ENCODE measurements at regions of chr1 and their contacts with region 1.

Region 1: GRCh38 chr1:231315887-231316286 is 21.8 kb downstream of the EXOC8 start:
- DNase-seq: peak; percentile 59
- H3K4me3 ChIP-seq: no peak overlapping the region
- H3K27ac ChIP-seq: no peak overlapping the region
- H3K4me1 ChIP-seq: no peaks in the 10 kb centered on the region
- H3K27me3 ChIP-seq: no peaks in the 10 kb centered on the region
- CTCF ChIP-seq: peak; percentile 70 to 83
- POLR2A ChIP-seq: no peak

Region 2: DNA sequence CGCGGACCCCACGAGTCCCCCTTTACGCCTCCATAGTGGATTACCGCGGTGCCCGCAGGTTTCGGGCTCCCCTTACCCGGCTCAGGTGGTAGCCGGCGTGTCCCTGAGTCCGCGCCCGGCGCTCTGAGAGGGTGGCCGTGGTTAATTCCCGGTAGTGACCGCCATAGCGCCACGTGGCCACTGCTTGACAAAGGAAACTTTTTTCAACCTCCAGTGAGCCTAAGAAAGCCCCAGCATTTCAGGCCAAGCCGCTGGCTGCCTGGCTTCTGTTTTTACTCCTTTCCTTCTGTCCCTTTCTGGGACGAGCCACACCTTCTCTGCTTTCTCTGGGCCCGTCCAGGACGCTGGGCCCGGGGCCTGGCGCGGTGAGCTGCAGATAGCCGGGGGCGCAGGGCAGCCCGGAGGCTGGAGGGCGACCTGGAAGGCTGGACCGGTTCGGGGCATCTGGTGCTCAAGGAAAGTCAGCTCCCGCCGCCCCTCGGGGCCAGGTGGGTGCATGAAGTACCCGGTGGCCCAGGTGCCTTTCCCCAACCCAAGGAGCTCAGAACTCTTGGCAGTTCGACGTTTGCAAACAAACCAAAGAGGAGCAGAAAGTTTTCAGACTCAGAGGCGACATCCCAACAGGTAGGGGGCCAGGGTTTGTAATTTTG is 447.0 kb before region 1 on chr1:
- CTCF ChIA-PET with region 1: no interaction called
- POLR2A ChIA-PET with region 1: no interaction called
- dilution Hi-C with region 1: no loop called
- intact Hi-C with region 1: no loop called
- DNase-seq: peak; percentile 45
- H3K4me3 ChIP-seq: peak overlapping the region; percentile 27 to 93 (median 42)
- H3K27ac ChIP-seq: peak overlapping the region; percentile 33
- H3K4me1 ChIP-seq: peaks cover 17% of the 10 kb centered on the region
- H3K27me3 ChIP-seq: no peaks in the 10 kb centered on the region
- CTCF ChIP-seq: no peak
- POLR2A ChIP-seq: no peak

Region 3: DNA sequence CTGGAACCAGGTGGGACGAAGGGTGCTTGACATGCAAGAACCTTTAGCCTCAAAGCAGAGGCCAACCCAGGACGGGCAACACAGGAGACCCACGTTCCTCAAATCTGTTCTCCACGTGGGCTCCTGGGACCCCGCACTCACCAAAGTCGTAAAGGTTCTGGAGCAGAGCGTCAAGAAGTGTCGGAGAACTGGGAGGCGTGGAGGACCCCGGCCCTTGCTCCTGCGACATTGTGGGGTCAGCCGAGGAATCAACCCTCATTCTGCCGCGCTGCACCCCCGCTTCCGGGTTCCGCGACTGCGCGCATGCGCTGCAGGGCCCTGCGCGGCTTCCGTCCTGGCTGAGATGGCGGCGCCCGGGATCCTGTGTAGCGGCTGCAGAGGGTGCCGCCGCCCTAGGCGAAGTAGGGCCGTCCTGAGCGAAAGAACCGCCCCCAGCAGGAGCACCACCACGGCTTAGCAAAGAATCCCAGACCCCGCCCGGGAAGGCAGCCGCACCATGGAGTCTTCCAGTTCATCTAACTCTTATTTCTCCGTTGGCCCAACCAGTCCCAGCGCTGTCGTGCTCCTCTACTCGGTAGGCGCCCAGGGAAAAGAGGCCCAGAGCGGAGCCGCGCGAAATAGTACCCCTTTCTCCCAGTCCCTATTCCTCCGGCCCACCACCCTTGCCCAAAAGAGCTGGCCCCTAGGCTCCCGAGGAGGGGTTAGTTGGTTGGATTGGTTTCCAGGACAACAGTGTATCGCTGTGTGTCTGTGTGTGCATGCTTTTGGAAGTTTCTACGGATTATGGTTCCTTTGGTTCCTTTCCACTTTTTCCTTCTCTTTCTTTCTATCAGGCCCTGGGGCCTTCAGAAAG is 74.8 kb before region 1 on chr1 and contains the start of gene GNPAT:
- CTCF ChIA-PET with region 1: no interaction called
- POLR2A ChIA-PET with region 1: no interaction called
- dilution Hi-C with region 1: no loop called
- intact Hi-C with region 1: loop called (anchors 5 kb)
- DNase-seq: peak; percentile 87
- H3K4me3 ChIP-seq: peak within 1 kb of the TSS; percentile 57 to 97 (median 94)
- H3K27ac ChIP-seq: peak within 1 kb of the TSS; percentile 59
- H3K4me1 ChIP-seq: peaks cover 19% of the 10 kb centered on the region
- H3K27me3 ChIP-seq: no peaks in the 10 kb centered on the region
- CTCF ChIP-seq: no peak
- POLR2A ChIP-seq: peak; percentile 94
- total RNA-seq, gene GNPAT: 44.1 and 51.4 TPM in 2 replicates

Region 4: DNA sequence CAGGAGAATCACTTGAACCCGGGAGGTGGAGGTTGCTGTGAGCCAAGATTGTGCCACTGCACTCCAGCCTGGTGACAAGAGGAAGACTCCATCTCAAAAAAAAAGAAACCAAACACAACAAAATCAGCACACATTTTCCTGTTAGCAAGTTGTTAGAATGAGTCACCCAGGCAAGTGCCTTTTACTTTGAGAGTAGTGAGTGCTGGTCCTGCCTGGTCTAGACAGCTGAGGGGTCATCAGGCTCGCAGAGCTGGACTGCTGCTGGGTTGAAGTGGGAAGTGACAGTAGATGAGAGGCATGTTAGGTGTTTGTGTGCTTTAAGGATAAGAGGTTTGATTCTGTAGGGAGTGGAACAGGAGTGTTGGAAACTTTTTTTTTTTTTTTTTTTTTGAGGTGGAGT is 43.0 kb before region 1 on chr1:
- CTCF ChIA-PET with region 1: interaction called, 3 read pairs
- POLR2A ChIA-PET with region 1: no interaction called
- dilution Hi-C with region 1: no loop called
- intact Hi-C with region 1: loop called (anchors 1 kb)
- DNase-seq: peak; percentile 85
- H3K4me3 ChIP-seq: no peak overlapping the region
- H3K27ac ChIP-seq: peak overlapping the region; percentile 74
- H3K4me1 ChIP-seq: peaks cover 21% of the 10 kb centered on the region
- H3K27me3 ChIP-seq: no peaks in the 10 kb centered on the region
- CTCF ChIP-seq: no peak
- POLR2A ChIP-seq: no peak

Region 5: GRCh38 chr1:231337472-231338269 is 21.8 kb after region 1 on chr1 and contains the start of gene EXOC8:
- CTCF ChIA-PET with region 1: interaction called, 11 read pairs
- POLR2A ChIA-PET with region 1: interaction called, 3 read pairs
- dilution Hi-C with region 1: no loop called
- intact Hi-C with region 1: loop called (anchors 2 kb)
- DNase-seq: peak; percentile 100
- H3K4me3 ChIP-seq: peak within 1 kb of the TSS; percentile 36 to 89 (median 70)
- H3K27ac ChIP-seq: peak within 1 kb of the TSS; percentile 90
- H3K4me1 ChIP-seq: peaks cover 47% of the 10 kb centered on the region
- H3K27me3 ChIP-seq: no peaks in the 10 kb centered on the region
- CTCF ChIP-seq: peak in 1 of 2 donors; percentile 4
- POLR2A ChIP-seq: peak; percentile 77
- total RNA-seq, gene EXOC8: 12.6 and 13.2 TPM in 2 replicates

Region 6: GRCh38 chr1:231584124-231584523 is 268.2 kb after region 1 on chr1:
- CTCF ChIA-PET with region 1: interaction called, 10 read pairs
- POLR2A ChIA-PET with region 1: no interaction called
- dilution Hi-C with region 1: no loop called
- intact Hi-C with region 1: no loop called
- DNase-seq: peak; percentile 88
- H3K4me3 ChIP-seq: no peak overlapping the region
- H3K27ac ChIP-seq: peak overlapping the region; percentile 47
- H3K4me1 ChIP-seq: peaks cover 8% of the 10 kb centered on the region
- H3K27me3 ChIP-seq: no peaks in the 10 kb centered on the region
- CTCF ChIP-seq: peak in 1 of 2 donors; percentile 20
- POLR2A ChIP-seq: no peak

Region 7: DNA sequence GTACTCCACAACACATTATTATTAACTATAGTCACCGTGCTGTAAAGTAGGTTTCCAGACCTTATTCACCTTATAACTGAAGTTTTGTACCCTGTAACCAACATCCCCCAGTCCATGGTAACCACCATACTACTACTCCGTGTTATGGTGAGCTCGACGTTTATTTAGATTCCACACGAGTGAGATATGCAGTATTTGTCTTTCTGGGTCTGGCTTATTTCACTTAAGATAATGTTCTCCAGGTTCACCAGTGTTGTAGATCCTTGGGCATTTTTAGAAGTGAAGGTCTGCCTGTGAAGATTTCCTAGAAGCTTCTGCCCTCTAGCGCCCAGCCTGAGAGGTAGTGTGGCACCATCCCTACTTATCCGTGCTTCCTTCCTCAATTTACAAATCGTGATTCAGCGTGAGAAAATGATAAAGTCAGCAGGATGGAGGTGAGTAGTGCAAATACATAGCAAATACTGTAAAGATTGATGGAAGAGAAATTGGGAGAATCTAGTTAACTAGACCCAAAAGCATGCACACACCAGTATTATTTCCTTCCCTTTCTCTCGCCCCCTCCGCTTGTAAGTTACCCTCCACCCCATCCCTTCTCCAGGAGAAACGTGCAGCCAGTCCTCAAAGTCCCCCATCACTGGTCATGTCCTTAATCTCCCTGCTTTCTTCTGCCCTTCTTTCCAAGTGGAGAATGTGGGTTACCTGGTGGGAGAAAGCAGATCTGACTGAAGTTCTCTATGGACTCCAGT is 274.7 kb after region 1 on chr1:
- CTCF ChIA-PET with region 1: interaction called, 4 read pairs
- POLR2A ChIA-PET with region 1: no interaction called
- dilution Hi-C with region 1: no loop called
- intact Hi-C with region 1: loop called (anchors 1 kb)
- DNase-seq: peak; percentile 78
- H3K4me3 ChIP-seq: no peak overlapping the region
- H3K27ac ChIP-seq: no peak overlapping the region
- H3K4me1 ChIP-seq: no peaks in the 10 kb centered on the region
- H3K27me3 ChIP-seq: no peaks in the 10 kb centered on the region
- CTCF ChIP-seq: peak; percentile 69 to 81
- POLR2A ChIP-seq: no peak